Dorsolateral prefrontal cortex (tissue), 120 donors: ENCODE measurements at regions of chr17 and their contacts with region 1.

Region 1: GRCh38 chr17:75749545-75750389 is 15.2 kb downstream of the GALK1 start:
- DNase-seq: peak; percentile 83 to 94 (median 90)
- H3K4me3 ChIP-seq: peak overlapping the region in 20 of 59 donors; percentile 3 to 41 (median 24)
- H3K27ac ChIP-seq: peak overlapping the region in 45 of 59 donors; percentile 4 to 84 (median 43)
- H3K27me3 ChIP-seq: no peaks in the 10 kb centered on the region
- CTCF ChIP-seq: peak; percentile 85 to 99 (median 96)

Region 2: GRCh38 chr17:75412455-75413317 is 337.1 kb before region 1 on chr17:
- intact Hi-C with region 1: loop called in 1 of 2 experiments (anchors 10 kb)
- DNase-seq: peak in 8 of 10 donors; percentile 32 to 68 (median 46)
- H3K4me3 ChIP-seq: peak overlapping the region in 39 of 59 donors; percentile 4 to 57 (median 30)
- H3K27ac ChIP-seq: peak overlapping the region in 3 of 59 donors; percentile 6 to 61 (median 13)
- H3K27me3 ChIP-seq: no peaks in the 10 kb centered on the region
- CTCF ChIP-seq: peak; percentile 43 to 91 (median 79)

Region 3: DNA sequence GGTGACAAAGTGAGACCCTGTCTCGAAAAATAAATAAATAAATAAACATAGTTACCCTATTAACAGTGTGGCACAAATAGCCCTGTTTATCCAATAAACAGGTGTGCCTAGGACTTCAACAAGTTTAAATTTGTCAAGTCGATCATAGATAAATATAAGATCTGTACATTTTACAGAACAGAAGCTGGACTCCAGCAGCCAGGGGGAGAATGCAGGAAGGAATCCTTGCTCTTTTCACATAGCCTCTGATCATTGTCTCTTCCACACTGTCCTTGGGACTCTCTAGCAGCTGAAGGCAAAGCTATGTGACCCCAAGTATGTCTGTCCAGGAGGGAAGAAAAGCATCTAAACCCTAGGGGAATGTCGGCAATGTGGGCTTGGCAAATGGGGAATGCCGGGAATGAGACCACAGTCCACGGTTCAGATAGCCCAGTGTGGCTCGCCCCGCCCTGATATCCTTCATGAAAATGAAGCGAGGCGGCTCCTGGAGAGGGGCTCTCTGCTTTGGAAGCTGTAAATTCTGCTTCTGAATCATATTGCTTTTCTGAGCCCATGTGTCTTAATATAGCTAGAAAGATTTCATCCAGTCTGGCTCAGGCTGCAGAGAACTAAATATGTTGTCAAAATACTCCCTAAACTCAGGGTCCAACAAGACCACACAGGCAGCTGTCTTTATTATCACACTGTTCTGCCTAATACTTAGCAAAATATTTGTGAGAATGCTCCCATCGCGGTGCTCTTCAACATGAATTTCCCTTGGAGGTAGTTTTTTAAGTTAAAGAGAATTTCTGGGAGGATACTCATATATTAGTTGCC is 319.4 kb before region 1 on chr17:
- intact Hi-C with region 1: loop called in 1 of 2 experiments (anchors 10 kb)
- DNase-seq: peak in 2 of 10 donors; percentile 21 to 45
- H3K4me3 ChIP-seq: peak overlapping the region in 2 of 59 donors; percentile 3 to 9
- H3K27ac ChIP-seq: peak overlapping the region in 31 of 59 donors; percentile 0 to 84 (median 41)
- H3K27me3 ChIP-seq: no peaks in the 10 kb centered on the region
- CTCF ChIP-seq: peak in 1 of 56 donors; percentile 9

Region 4: DNA sequence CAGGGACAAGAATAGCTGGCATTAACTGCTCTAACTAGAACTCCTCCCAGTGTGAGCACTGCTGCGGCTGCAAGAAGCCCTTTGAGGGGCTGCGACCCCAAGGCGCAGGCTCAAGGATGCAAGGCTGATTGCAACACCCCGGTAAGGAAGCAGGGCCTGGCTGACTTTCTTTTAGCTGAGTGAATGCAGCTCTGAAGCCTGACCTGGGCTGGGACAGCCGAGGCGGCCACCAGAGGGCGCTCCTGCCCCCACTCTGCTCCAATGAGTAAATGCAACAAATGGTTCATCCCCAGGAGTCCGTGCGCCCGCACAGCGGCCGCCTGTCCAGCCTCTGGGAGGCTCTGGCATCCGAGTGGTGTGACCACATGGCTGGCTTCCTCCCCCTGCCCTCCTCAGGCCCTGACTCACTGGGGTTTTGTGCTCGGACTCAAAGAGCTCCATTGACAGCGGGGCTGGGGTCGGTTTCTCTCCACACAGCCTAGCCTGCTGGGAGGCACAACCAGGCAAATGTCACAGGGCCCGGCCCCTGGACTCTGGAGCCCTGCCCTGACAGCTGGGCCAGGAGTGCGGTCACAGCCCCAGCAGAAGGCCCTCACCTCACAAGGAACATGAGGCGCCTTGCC is 116.8 kb before region 1 on chr17 and contains the start of gene SMIM5:
- intact Hi-C with region 1: loop called (anchors 1 to 2 kb)
- DNase-seq: peak; percentile 94 to 99 (median 96)
- H3K4me3 ChIP-seq: peak within 1 kb of the TSS; percentile 20 to 73 (median 54)
- H3K27ac ChIP-seq: peak within 1 kb of the TSS; percentile 40 to 100 (median 98)
- H3K27me3 ChIP-seq: no peaks in the 10 kb centered on the region
- CTCF ChIP-seq: peak; percentile 94 to 100 (median 98)
- total RNA-seq, gene SMIM5: 0.95 to 34.0 (median 5.6) TPM

Region 5: GRCh38 chr17:75679706-75680442 is 69.9 kb before region 1 on chr17:
- intact Hi-C with region 1: loop called (anchors 1 to 2 kb)
- DNase-seq: peak in 1 of 10 donors; percentile 65
- H3K4me3 ChIP-seq: no peak overlapping the region
- H3K27ac ChIP-seq: peak overlapping the region in 57 of 59 donors; percentile 16 to 87 (median 69)
- H3K27me3 ChIP-seq: no peaks in the 10 kb centered on the region
- CTCF ChIP-seq: peak in 54 of 56 donors; percentile 9 to 76 (median 50)

Region 6: GRCh38 chr17:75808905-75809715 is 59.3 kb after region 1 on chr17:
- intact Hi-C with region 1: no loop called
- DNase-seq: peak in 2 of 10 donors; percentile 22 to 35
- H3K4me3 ChIP-seq: no peak overlapping the region
- H3K27ac ChIP-seq: peak overlapping the region in 4 of 59 donors; percentile 0 to 61 (median 34)
- H3K27me3 ChIP-seq: no peaks in the 10 kb centered on the region
- CTCF ChIP-seq: no peak